OCI-LY7 (cell line): ENCODE measurements at regions of chr14 and their contacts with region 1.

Region 1: GRCh38 chr14:74401504-74402241 is 24.3 kb downstream of the SYNDIG1L start:
- DNase-seq: peak; percentile 92
- H3K4me3 ChIP-seq: peak overlapping the region; percentile 65
- H3K27ac ChIP-seq: peak overlapping the region; percentile 90
- H3K4me1 ChIP-seq: peaks cover 40% of the 10 kb centered on the region
- CTCF ChIP-seq: no peak

Region 2: DNA sequence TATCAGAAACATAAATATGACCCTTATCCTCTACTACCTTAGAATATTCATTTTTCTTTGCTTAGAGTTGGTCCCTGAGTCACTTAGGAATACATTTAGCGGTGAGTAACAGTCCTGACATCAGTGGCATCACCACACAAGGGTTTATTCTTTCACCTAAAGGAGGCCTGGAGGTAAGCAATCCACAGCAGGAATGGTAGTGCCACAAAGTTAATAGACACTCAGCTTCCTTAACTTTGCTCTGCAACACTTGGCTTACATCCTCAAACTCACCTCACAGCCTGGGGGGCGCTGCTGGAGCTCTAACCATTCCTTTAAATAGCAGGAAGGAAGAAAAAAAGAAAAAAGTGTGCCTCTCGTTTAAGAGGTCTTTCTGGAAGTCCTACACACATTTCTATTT is 353.4 kb before region 1 on chr14:
- CTCF ChIA-PET with region 1: no interaction called
- POLR2A ChIA-PET with region 1: no interaction called
- intact Hi-C with region 1: no loop called
- DNase-seq: peak; percentile 21
- H3K4me3 ChIP-seq: no peak overlapping the region
- H3K27ac ChIP-seq: no peak overlapping the region
- H3K4me1 ChIP-seq: peaks cover 11% of the 10 kb centered on the region
- CTCF ChIP-seq: peak; percentile 67

Region 3: GRCh38 chr14:74302634-74303577 is 98.8 kb before region 1 on chr14 and contains the start of gene ABCD4:
- CTCF ChIA-PET with region 1: no interaction called
- POLR2A ChIA-PET with region 1: interaction called, 3 read pairs
- intact Hi-C with region 1: loop called (anchors 2 kb)
- DNase-seq: peak; percentile 94
- H3K4me3 ChIP-seq: peak within 1 kb of the TSS; percentile 86
- H3K27ac ChIP-seq: peak within 1 kb of the TSS; percentile 66
- H3K4me1 ChIP-seq: peaks cover 16% of the 10 kb centered on the region
- CTCF ChIP-seq: peak; percentile 87
- total RNA-seq, gene ABCD4: 39.3 and 46.6 TPM in 2 replicates

Region 4: GRCh38 chr14:74362361-74362915 is 39.2 kb before region 1 on chr14:
- CTCF ChIA-PET with region 1: no interaction called
- POLR2A ChIA-PET with region 1: interaction called, 4 read pairs
- intact Hi-C with region 1: loop called (anchors 2 kb)
- DNase-seq: peak; percentile 60
- H3K4me3 ChIP-seq: no peak overlapping the region
- H3K27ac ChIP-seq: no peak overlapping the region
- H3K4me1 ChIP-seq: no peaks in the 10 kb centered on the region
- CTCF ChIP-seq: peak; percentile 98

Region 5: DNA sequence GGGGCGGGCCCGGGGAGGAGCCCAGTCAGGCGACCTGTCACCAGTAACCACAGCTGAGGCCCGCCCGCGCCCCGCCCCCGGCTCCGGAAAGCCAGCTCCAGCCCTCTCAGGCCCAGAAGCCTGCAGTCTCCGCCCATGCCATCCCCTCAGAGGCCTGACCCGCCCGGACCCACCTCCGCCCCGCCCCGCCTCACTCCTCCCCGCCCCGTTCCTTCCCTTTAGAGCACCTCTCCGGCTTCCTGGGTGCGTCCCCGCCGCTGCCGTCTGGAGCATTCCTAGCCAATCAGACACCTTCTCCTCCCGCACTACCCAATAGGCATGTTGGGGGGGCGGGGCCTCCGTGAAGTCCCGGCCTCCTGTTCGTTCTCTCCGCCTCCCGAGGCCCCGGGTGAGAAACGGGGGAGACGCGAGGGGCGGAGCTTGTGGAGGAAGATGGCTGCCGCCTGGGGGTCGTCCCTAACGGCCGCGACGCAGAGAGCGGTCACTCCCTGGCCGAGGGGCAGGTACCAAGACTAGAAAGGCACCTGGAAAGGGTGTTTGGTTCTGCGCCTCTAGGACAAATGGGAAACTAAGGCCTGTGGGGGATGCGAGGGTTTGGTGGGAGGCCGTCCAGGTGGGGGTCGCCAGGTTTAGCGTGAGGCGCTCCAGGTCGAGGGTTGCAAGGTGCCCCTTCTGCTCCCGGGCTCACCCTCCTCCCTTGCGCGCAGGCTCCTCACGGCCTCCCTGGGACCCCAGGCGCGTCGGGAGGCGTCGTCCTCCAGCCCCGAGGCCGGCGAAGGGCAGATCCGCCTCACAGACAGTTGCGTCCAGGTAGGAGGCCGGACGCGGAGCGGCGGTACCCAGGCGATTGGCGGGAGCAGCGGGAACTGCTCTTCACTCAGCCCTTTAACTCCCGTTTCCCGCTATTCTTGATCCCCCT is 91.9 kb after region 1 on chr14 and contains the start of gene ISCA2:
- CTCF ChIA-PET with region 1: no interaction called
- POLR2A ChIA-PET with region 1: interaction called, 7 read pairs
- intact Hi-C with region 1: loop called (anchors 2 kb)
- DNase-seq: peak; percentile 99
- H3K4me3 ChIP-seq: peak within 1 kb of the TSS; percentile 89
- H3K27ac ChIP-seq: peak within 1 kb of the TSS; percentile 36
- H3K4me1 ChIP-seq: peaks cover 43% of the 10 kb centered on the region
- CTCF ChIP-seq: no peak
- total RNA-seq, gene ISCA2: 19.6 and 38.4 TPM in 2 replicates